Activated CD4-positive, alpha-beta memory T cell treated with anti-CD3 and anti-CD28 coated beads for 36 hours (primary cell): ENCODE measurements at regions of chr12 and their contacts with region 1.

Region 1: GRCh38 chr12:108691175-108691997 is 39.9 kb downstream of the CORO1C start:
- DNase-seq: peak; percentile 91
- H3K4me3 Mint-ChIP-seq: peak overlapping the region; percentile 56
- H3K27ac Mint-ChIP-seq: peak overlapping the region; percentile 94
- H3K4me1 Mint-ChIP-seq: peaks cover 70% of the 10 kb centered on the region
- H3K27me3 Mint-ChIP-seq: no peaks in the 10 kb centered on the region

Region 2: GRCh38 chr12:108562348-108563135 is 128.8 kb before region 1 on chr12 and contains the start of gene ISCU:
- CTCF ChIA-PET with region 1: interaction called, 4 read pairs
- POLR2A ChIA-PET with region 1: interaction called, 5 read pairs
- intact Hi-C with region 1: loop called (anchors 1 kb)
- DNase-seq: peak; percentile 99
- H3K4me3 Mint-ChIP-seq: peak within 1 kb of the TSS; percentile 100
- H3K27ac Mint-ChIP-seq: peak within 1 kb of the TSS; percentile 99
- H3K4me1 Mint-ChIP-seq: peaks cover 57% of the 10 kb centered on the region
- H3K27me3 Mint-ChIP-seq: no peaks in the 10 kb centered on the region
- total RNA-seq, gene ISCU: 88.6 to 94.3 TPM

Region 3: DNA sequence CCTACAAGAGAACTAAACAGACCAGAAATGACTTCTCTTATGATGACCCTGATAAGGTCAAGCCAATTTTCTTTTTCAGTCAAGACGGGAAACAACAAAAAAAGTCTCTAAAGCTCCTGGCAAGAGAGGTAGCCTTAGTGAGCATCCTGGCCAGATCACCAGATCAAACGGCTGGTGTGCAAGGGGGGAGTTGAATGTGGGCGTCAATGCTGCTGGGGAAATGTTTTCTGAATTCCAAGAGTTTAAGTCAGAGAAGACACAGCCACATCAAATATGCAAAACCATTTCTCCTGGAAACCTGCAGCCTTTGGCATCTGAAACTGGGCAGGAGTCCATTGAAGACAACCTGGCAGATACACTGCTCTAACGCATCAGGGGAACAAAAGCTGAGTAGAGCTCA is 41.7 kb before region 1 on chr12:
- CTCF ChIA-PET with region 1: no interaction called
- POLR2A ChIA-PET with region 1: interaction called, 3 read pairs
- intact Hi-C with region 1: loop called (anchors 1 kb)
- DNase-seq: no peak
- H3K4me3 Mint-ChIP-seq: no peak overlapping the region
- H3K27ac Mint-ChIP-seq: peak overlapping the region; percentile 50
- H3K4me1 Mint-ChIP-seq: peaks cover 38% of the 10 kb centered on the region
- H3K27me3 Mint-ChIP-seq: no peaks in the 10 kb centered on the region

Region 4: DNA sequence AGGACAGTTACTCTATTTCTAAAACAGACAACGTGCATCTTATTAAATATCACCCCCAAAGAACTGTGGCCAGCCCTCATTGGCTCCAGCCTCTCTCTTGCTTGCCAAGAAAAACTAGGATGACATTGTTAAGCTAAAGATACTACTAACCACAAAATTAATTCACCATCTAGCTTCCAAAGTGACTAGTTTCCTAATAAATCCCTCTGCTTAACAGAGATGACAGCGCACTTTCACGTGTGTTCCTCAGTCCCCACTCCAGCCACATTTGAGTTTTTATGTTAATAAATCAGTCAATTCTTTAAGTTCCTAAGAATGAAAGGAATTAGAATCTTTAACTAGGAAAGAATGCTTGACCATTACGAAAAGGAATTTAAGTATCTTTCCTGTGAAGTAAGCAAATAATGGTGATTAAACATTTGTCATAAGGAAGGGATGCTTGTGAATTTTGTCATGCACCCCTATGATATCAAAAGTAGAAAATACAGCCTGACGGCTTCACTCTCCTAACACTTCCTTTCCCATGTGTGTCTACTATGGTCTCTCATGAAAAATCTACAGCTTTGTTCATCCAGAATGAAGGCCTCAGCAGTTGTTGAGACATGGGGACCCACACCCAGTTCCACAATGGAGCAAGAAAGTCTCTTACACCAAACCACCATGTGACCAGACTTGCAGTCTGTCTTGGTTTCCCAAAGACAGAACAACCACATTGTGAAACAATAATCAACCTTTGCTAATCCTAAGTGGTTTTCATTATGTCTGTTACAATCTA is 31.8 kb after region 1 on chr12:
- CTCF ChIA-PET with region 1: interaction called, 8 read pairs
- POLR2A ChIA-PET with region 1: interaction called, 14 read pairs
- intact Hi-C with region 1: loop called (anchors 1 kb)
- DNase-seq: no peak
- H3K4me3 Mint-ChIP-seq: no peak overlapping the region
- H3K27ac Mint-ChIP-seq: no peak overlapping the region
- H3K4me1 Mint-ChIP-seq: peaks cover 32% of the 10 kb centered on the region
- H3K27me3 Mint-ChIP-seq: no peaks in the 10 kb centered on the region

Region 5: GRCh38 chr12:108856428-108857157 is 165.2 kb after region 1 on chr12:
- CTCF ChIA-PET with region 1: no interaction called
- POLR2A ChIA-PET with region 1: no interaction called
- intact Hi-C with region 1: loop called (anchors 1 kb)
- DNase-seq: peak; percentile 82
- H3K4me3 Mint-ChIP-seq: peak overlapping the region; percentile 97
- H3K27ac Mint-ChIP-seq: peak overlapping the region; percentile 92
- H3K4me1 Mint-ChIP-seq: peaks cover 53% of the 10 kb centered on the region
- H3K27me3 Mint-ChIP-seq: peaks cover 2% of the 10 kb centered on the region